AG04449 (cell line): ENCODE measurements at regions of chr2 and their contacts with region 1.

Region 1: GRCh38 chr2:240566203-240567136 is 1.8 kb upstream of the RNPEPL1 start:
- DNase-seq: no peak
- H3K4me3 ChIP-seq: peak overlapping the region; percentile 44
- CTCF ChIP-seq: peak; percentile 81

Region 2: DNA sequence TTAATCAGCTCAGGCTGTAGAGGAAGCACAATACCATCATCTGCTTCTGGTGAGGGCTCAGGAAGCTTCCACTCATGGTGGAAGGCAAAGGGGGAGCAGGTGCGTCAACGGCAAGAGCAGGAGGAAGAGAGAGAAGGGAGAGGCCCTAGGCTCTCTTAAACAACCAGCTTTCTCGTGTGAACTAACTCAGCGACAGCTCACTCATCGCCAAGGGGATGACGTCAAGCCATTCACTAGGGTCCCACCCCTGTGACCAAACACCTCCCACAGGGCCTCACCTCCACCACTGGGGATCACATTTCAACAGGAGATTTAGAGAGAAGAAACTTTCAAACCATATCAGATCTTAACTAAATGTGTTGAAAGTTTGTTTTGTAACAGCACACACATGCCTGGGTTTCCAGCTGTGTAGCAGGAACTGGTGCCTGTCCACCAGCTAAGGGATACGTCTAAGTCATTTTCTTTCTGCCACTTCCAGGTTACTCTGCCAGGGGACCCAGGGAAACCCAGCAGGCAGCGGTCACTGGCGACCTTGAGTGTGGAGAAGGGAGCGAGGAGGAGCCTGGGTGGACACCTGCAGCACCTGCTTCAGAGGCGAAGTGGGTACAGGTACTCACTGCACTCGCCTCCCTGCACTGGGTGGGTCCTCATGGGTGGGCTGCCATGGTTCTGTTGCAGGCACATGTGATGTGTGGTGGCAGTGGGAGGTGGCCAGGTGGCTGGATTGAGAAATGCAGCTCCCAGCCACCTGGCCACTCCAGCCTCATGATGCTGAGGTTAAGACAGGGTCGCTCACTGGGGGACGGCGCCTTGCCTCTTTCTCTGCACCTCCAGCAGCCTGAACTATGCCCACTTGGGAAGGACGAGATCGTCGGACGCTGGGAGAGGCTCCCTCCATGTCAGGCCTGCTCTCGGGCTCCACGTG is 139.4 kb before region 1 on chr2:
- CTCF ChIA-PET with region 1: no interaction called
- POLR2A ChIA-PET with region 1: no interaction called
- DNase-seq: no peak
- H3K4me3 ChIP-seq: no peak overlapping the region
- CTCF ChIP-seq: no peak

Region 3: DNA sequence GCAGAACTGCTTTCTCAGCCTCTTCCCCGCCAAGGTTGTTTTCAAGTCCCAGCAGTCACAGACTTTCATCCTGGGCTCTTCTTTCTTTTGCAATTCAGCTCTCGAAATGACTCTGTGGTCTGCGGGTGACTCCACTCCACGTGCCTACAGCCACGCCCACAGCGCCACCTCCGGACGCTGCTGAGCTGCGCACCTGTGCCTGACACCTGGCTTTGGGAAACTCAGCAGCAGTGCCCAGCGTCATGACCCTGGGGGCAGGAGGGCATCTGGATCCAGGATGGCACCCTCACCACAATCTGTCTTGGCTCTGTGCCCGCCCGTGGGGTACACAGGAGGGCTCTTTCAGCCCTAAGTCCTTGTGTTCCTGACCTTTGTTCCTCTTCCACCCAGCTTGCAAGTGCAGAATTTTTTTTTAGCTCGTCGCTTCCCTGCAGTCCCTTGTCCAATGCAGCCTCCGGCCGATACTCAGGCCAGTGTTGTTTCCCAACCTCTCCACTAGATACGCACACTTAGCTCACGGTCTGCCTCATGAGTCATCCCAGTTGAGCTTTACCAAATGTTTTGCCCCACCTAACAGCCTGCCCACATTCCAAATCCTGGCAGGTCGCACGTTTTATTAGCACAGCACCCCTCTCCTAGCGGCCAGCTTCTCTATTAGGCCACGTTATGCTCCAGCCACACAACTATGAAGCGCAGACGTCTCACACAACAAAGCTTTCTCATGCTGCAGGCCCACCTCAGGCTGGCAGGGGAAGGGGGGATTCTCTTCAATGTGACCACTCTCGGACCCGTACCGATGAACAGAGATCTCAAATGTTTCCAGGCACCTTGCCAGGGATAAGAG is 13.5 kb after region 1 on chr2:
- CTCF ChIA-PET with region 1: interaction called, 75 read pairs
- POLR2A ChIA-PET with region 1: interaction called, 10 read pairs
- DNase-seq: no peak
- H3K4me3 ChIP-seq: no peak overlapping the region
- CTCF ChIP-seq: no peak

Region 4: DNA sequence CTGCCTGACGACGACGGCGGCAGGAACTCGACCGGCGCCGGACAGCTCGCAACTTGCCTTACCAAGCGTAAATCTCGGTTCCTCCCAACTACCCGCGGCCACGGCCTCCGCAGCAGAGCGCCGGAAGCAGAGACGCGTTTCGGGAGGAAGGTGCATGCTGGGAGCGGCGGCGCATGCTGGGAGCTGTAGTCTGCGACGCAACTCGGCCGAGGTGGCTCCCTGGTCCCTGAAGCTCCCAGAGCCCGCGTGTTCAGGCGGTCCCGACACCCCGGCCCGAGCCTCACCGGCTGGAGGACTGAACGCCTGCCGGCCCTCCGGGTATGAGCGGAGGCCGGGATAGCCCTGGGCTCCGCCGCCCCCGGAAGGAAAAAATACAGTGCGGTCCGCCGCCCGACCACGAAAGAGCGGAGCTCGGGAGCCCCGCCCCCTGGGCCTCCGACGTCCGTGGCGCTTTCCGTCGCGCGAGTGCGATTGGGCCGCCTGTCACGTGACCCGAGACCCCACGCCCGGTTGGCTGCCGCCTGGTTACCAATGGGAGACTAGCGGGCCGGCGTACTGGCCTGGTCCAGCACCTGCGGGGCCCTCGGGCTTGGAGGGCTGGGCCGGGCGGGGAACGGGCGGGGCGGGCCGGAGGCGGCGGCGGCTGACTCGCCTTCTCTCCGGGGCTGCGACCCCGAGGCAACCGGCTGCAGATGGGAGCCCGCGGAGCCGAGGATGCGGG is 19.9 kb after region 1 on chr2 and contains the start of gene CAPN10:
- CTCF ChIA-PET with region 1: interaction called, 75 read pairs
- POLR2A ChIA-PET with region 1: interaction called, 10 read pairs
- DNase-seq: peak; percentile 47
- H3K4me3 ChIP-seq: peak within 1 kb of the TSS; percentile 72
- CTCF ChIP-seq: no peak

Region 5: GRCh38 chr2:240810207-240810606 is 243.7 kb after region 1 on chr2:
- CTCF ChIA-PET with region 1: no interaction called
- POLR2A ChIA-PET with region 1: no interaction called
- DNase-seq: no peak
- H3K4me3 ChIP-seq: no peak overlapping the region
- CTCF ChIP-seq: no peak

Region 6: DNA sequence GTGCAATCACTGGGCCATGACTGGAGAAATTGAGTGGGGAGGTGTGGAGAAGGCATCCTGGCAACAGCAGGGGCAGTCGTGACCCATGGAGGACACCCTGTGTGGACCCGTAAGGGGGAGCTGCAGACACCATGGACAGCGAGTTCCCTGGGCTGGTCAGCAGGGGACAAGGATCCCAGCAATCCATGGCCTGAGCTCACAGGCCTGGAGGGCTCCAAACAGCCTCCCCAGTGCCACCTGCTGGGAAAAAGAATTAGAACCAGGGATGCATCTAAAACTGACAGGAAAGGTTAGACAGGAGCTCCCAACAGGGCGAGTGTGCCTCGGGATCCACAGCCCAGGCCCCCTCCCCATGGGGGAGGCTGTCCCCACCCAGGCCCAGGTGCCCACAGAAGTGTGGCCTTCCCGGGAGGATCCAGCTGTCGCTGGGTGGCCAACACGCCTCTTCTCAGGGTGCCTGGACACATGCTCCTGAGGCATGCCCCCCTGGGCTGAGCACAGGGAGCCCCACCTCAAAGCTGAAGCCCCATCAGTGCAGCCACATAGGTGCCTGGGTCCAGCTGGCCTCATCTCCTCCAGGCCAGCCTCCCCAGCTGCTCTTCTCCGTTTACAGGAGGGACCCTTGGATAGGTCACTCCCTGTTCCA is 274.1 kb after region 1 on chr2:
- CTCF ChIA-PET with region 1: interaction called, 11 read pairs
- POLR2A ChIA-PET with region 1: no interaction called
- DNase-seq: no peak
- H3K4me3 ChIP-seq: no peak overlapping the region
- CTCF ChIP-seq: peak; percentile 69